Dendritic cell treated with granulocyte-macrophage colony-stimulating factor and Interleukin-4, amounts not matched to agents 40 ng/mL and 50 ng/mL, for 4 days (primary cell): ENCODE measurements at regions of chr6 and their contacts with region 1.

Region 1: DNA sequence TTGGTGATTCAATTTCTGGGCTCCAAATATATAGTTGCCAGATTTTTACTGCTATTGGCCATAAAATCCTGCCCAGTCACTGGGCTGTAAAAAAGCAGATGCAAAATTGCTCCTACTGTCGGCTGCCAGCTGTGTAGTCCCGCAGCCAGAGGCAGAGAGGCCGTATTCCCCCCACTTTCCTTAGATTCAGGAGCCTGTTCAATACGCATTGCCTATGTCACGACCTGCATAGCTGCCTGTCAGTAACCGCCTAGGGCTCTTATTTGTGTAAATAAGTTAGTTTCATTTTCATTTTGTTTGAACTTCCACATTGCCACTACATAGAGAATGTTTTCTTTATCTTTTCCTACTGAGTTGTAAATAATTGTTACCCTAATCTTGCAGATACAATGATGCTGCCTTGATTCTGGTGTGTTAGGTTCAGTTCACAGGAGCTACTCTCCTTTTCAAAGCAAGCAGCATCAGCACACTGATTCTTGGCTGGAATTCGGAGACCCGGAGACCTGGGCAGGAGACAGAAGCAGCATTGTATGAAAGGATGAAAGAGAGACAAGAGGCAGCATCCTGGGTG is 46.0 kb upstream of the UST start:
- H3K4me3 Mint-ChIP-seq: peak overlapping the region; percentile 63
- H3K27ac Mint-ChIP-seq: peak overlapping the region; percentile 65
- H3K4me1 Mint-ChIP-seq: peaks cover 12% of the 10 kb centered on the region
- H3K27me3 Mint-ChIP-seq: no peaks in the 10 kb centered on the region

Region 2: DNA sequence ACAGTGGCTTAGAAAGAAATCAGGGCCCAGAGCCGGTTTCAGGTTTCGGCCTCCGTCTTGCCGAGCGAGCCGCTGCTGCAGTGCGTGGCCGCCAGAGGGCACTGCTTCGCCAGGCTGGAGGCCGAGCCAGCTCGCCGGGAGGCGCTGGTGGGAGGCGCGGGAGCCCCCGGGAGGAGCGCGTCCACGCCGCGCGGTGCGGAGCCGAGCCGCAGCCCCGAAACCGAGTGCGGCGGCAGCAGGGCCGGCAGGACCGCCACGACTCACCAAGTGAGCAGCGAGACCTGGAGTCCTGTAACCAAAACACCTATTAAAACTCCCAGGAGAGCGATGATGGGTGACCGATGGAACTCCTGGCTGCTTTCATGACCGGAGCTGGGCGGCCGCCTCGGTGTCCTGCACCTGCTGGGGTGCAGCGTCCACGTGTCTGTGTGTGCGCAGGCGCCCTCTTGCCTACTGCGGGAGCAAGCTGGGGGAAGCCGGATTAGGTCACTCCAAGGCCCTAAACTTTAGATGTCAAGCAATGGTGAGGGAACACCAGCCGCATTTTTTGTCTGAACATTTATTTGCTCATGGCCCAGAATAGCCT is 140.9 kb before region 1 on chr6:
- intact Hi-C with region 1: loop called (anchors 5 kb)
- H3K4me3 Mint-ChIP-seq: peak overlapping the region; percentile 51
- H3K27ac Mint-ChIP-seq: no peak overlapping the region
- H3K4me1 Mint-ChIP-seq: peaks cover 27% of the 10 kb centered on the region
- H3K27me3 Mint-ChIP-seq: peaks cover 18% of the 10 kb centered on the region

Region 3: DNA sequence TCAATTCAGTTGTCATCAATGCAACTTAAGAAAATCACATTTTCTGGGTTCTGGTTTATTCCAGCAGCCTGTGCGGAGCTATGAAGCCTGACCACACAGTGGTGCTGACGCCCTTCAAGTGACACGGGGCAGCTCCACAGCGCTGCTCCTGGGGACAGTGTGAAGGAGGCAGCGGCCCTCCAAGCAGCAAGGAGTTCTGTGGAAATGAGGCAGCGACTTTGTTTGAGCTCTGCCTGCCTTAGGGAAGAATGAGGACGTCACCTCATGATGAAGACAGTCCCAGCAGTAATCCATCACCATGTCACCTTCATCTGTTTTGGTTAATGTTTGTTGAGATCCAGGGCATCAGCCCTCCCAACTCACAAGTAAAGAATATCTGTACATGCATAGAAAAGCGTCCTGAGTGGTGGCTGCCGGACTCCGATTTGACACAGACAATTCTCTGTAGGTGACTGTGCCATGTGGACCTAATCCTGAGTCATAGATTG is 122.5 kb before region 1 on chr6:
- intact Hi-C with region 1: loop called (anchors 5 kb)
- H3K4me3 Mint-ChIP-seq: no peak overlapping the region
- H3K27ac Mint-ChIP-seq: no peak overlapping the region
- H3K4me1 Mint-ChIP-seq: peaks cover 26% of the 10 kb centered on the region
- H3K27me3 Mint-ChIP-seq: peaks cover 28% of the 10 kb centered on the region

Region 4: GRCh38 chr6:148866657-148867268 is 165.9 kb after region 1 on chr6:
- intact Hi-C with region 1: no loop called
- H3K4me3 Mint-ChIP-seq: no peak overlapping the region
- H3K27ac Mint-ChIP-seq: no peak overlapping the region
- H3K4me1 Mint-ChIP-seq: peaks cover 6% of the 10 kb centered on the region
- H3K27me3 Mint-ChIP-seq: no peaks in the 10 kb centered on the region